PC-9 (cell line): ENCODE measurements at regions of chr22 and their contacts with region 1.

Region 1: GRCh38 chr22:43370036-43370435 is 26.9 kb upstream of the SCUBE1 start:
- DNase-seq: no peak
- H3K4me3 ChIP-seq: no peak overlapping the region
- H3K27ac ChIP-seq: no peak overlapping the region
- H3K4me1 ChIP-seq: no peaks in the 10 kb centered on the region
- H3K27me3 ChIP-seq: peaks cover 97% of the 10 kb centered on the region
- CTCF ChIP-seq: no peak

Region 2: GRCh38 chr22:41966607-41967240 is 1403.3 kb before region 1 on chr22:
- CTCF ChIA-PET with region 1: no interaction called
- POLR2A ChIA-PET with region 1: interaction called, 20 read pairs
- intact Hi-C with region 1: no loop called
- DNase-seq: peak; percentile 59 to 80
- H3K4me3 ChIP-seq: no peak overlapping the region
- H3K27ac ChIP-seq: no peak overlapping the region
- H3K4me1 ChIP-seq: no peaks in the 10 kb centered on the region
- H3K27me3 ChIP-seq: peaks cover 8% of the 10 kb centered on the region; the same call in 1 of the 2 replicates
- CTCF ChIP-seq: peak; percentile 73

Region 3: DNA sequence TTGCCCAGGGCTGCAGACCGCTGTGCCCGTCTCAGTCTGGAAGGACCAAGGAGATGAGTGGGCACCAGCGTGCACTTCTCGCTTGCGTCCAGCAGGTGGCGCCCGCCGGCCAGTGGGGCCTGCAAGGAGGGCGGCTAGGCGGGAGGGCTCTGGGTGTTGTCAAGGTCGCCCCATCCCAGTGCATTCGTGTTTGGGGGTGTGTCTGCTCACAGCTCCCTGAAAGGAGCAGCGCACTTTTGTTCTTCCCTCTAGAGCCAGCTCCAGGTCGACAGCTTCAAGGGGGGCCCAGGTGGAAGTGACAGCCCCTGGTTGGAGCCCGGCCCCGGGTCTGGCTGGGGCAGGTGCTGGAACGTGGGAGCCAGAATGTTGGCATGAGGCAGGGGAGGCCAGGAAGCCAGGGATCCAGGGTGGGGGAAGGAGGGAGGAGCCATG is 18.4 kb after region 1 on chr22:
- CTCF ChIA-PET with region 1: no interaction called
- POLR2A ChIA-PET with region 1: no interaction called
- intact Hi-C with region 1: no loop called
- DNase-seq: peak; percentile 46 to 73
- H3K4me3 ChIP-seq: no peak overlapping the region
- H3K27ac ChIP-seq: no peak overlapping the region
- H3K4me1 ChIP-seq: no peaks in the 10 kb centered on the region
- H3K27me3 ChIP-seq: peaks cover 95% of the 10 kb centered on the region
- CTCF ChIP-seq: peak; percentile 99